Right cardiac atrium (tissue), 5 donors: ENCODE measurements at regions of chr14 and their contacts with region 1.

Region 1: DNA sequence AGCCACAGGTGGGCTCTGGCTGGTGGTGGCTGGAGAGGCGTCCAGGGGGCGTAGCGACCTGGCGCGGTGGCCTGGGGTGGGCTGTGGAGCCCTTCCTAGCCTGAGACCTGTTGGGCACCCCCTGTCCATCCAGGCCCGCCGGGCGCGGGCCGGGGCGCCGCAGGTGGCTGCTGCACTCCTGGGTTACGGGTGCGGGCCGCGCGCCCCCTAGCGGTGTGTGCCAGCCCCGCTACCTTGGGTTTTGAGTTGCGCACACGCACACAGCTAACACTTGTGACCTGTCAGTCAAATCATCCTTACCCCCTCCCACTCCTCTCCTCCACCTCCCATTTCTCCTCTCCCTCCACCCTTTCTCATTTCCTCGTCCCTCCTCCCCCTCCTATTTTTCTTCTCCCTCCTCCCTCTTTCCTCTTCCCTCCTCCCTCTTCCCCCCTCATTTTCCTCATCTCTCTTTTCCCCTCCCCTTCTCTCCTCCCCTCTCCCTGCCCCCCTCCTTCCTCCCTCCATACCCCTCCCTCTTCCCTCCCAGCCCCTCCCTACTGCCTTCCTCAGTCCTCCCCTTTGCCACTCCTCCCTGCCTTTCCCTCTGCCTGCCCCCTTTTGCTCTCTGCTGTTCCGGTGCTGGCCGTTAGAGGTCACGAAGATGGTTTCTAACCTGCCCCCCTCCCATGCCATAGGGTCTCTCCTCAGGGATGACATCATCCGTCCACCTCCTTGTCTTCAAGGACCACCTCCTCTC is 2.3 kb downstream of the MEG3 start:
- DNase-seq: peak in 1 of 3 donors; percentile 61
- ATAC-seq: peak in 1 of 2 donors; percentile 14
- H3K4me3 ChIP-seq: no peak overlapping the region
- H3K27ac ChIP-seq: no peak overlapping the region
- H3K4me1 ChIP-seq: no peaks in the 10 kb centered on the region
- H3K27me3 ChIP-seq: no peaks in the 10 kb centered on the region

Region 2: DNA sequence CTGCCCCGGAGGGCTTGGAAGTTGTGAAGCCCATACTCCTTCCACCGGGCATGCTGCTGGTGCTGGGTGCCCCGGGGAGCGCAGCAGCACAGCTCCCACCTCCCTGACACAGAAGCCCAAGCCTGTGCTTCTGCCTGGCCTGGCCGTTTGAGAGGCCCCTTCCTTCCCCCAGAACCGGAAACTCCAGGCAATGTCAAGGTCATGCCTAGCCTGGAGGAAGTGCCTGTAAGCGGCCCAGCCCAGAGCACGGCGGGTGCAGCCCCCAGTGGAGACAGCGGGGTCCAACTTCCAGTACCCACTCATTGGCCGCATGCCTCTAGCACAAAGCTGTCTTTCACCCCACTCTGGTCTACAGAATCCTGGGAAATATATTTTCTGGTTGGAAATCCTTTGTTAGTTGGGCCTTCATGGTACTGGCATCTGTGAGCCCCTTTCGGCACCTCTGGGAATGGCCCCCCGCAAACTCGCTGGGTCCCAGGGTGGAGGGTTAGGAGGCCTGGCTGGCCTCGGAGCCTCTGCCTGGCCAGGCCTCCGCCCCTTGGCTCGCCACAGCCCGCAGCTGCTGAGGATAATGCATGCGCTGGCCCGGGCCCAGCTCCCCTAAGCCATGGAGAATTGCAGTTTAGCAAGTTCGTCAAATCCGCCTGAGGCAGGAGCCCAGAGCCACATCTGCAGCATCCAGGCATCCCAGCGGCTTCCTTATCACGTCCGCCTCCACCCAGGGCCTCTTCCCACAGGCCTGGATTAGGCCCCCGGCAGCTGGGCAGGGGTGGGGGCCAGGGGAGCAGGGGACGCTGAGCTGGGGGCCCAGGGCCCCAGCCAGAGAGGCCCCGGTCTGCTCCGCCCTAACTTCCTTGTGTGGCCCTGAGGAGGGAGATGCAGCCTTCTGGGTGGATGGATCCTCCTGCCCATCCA is 150.4 kb before region 1 on chr14:
- intact Hi-C with region 1: loop called in 1 of 4 experiments (anchors 10 kb)
- DNase-seq: peak; percentile 75 to 93 (median 89)
- ATAC-seq: peak; percentile 73 to 80
- H3K4me3 ChIP-seq: no peak overlapping the region
- H3K27ac ChIP-seq: peak overlapping the region; percentile 10
- H3K4me1 ChIP-seq: peaks cover 15% of the 10 kb centered on the region
- H3K27me3 ChIP-seq: no peaks in the 10 kb centered on the region

Region 3: DNA sequence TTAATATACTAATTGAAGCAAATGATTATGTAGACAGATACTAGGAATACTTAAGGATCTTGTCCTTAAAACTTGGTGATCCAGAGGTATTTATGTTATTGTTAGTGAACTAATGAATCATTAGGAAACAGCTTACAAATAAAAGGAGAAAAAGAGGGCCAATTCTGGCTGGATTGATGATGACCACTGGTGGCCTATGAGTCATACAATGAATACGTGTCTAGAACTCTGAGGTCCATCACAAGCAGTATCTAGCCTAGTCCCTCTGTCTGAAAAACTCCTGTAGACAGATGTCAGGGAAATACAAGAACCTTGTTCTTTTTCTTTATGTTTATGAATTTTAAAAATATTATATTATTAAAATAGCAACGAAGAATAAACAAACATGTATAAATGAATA is 127.0 kb after region 1 on chr14:
- intact Hi-C with region 1: no loop called
- DNase-seq: no peak
- ATAC-seq: no peak
- H3K4me3 ChIP-seq: no peak overlapping the region
- H3K27ac ChIP-seq: no peak overlapping the region
- H3K4me1 ChIP-seq: no peaks in the 10 kb centered on the region
- H3K27me3 ChIP-seq: no peaks in the 10 kb centered on the region